AG04449 (cell line): ENCODE measurements at regions of chr7 and their contacts with region 1.

Region 1: DNA sequence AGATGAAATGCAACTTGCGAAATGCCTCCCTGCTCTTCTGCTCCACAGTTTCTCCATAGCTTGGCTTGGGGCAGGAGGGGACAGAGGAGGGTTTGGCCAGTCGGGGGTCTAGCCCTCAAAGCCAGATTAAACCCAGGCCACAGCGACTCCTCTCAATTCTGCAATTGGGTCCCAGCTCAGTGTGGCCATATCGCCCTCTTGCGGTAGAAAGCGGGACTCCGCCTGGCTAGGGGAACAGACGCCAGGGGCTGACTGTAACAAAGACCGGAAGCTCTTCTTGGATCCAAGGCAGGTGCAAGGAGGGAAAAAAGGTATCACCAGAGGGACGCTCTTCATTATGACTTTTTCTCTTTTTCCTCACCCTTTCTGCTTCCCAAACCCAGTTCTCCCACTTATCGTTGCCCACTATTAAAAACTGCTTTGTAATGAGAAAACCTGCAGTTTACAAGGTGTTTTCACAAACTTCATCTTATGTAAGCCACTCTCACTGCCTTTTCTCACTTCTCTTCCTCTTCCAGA is 36.6 kb upstream of the TNPO3 start:
- DNase-seq: no peak
- H3K4me3 ChIP-seq: no peak overlapping the region
- CTCF ChIP-seq: peak; percentile 99

Region 2: GRCh38 chr7:128883622-128884501 is 207.7 kb before region 1 on chr7:
- CTCF ChIA-PET with region 1: interaction called, 15 read pairs
- POLR2A ChIA-PET with region 1: no interaction called
- DNase-seq: no peak
- H3K4me3 ChIP-seq: no peak overlapping the region
- CTCF ChIP-seq: peak; percentile 97

Region 3: GRCh38 chr7:128993419-128993818 is 98.1 kb before region 1 on chr7:
- CTCF ChIA-PET with region 1: interaction called, 12 read pairs
- POLR2A ChIA-PET with region 1: no interaction called
- DNase-seq: no peak
- H3K4me3 ChIP-seq: no peak overlapping the region
- CTCF ChIP-seq: no peak

Region 4: DNA sequence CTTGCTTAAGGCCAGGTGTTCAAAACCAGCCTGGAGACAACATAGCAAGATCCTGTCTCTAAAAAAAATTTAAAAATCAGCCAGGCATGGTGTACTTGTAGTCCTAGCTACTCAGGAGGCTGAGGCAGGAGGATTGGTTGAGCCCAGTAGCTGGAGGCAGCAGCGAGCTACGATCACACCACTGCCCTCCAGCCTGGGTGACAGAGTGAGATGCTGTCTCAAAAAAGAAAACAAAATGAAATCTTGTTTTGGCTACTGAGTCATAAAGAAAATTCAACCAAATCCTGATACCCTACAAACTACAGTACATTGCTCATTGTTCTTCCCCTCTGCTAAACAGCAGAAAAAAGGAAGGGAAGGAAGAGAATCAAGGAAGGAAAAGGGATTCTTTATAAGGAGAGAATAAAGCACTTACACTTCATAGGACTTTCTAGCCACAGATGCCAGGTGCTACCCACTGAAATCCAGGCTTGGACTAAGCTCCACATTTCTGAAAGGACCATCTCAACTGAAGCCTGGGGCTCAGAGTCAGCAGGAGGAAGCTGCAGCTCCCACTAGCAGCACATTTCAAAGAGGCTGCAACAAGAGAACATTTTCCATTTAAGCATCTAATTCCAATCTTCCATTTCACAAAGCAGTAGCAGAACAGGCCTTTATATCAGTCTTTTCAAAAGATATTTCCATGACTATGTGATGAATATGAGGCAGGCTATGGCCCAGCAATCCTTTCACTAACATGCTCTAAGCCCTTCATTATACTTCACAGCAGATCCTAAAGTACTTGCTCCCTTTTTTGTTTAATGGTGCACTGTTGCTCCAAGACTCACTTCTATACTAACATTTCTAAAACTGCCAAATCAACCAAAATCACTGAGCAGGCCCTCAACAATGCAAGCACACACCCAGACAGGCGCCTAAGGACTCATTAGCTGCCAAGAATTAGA is 50.1 kb before region 1 on chr7:
- CTCF ChIA-PET with region 1: interaction called, 12 read pairs
- POLR2A ChIA-PET with region 1: no interaction called
- DNase-seq: no peak
- H3K4me3 ChIP-seq: no peak overlapping the region
- CTCF ChIP-seq: no peak

Region 5: GRCh38 chr7:129072479-129073011 is 19.0 kb before region 1 on chr7:
- CTCF ChIA-PET with region 1: interaction called, 78 read pairs
- POLR2A ChIA-PET with region 1: no interaction called
- DNase-seq: no peak
- H3K4me3 ChIP-seq: no peak overlapping the region
- CTCF ChIP-seq: no peak

Region 6: GRCh38 chr7:129115676-129116075 is 24.1 kb after region 1 on chr7:
- CTCF ChIA-PET with region 1: interaction called, 12 read pairs
- POLR2A ChIA-PET with region 1: no interaction called
- DNase-seq: no peak
- H3K4me3 ChIP-seq: no peak overlapping the region
- CTCF ChIP-seq: no peak

Region 7: GRCh38 chr7:129285111-129285510 is 193.6 kb after region 1 on chr7:
- CTCF ChIA-PET with region 1: no interaction called
- POLR2A ChIA-PET with region 1: no interaction called
- DNase-seq: no peak
- H3K4me3 ChIP-seq: no peak overlapping the region
- CTCF ChIP-seq: no peak